OCI-LY7 (cell line): ENCODE measurements at regions of chr15 and their contacts with region 1.

Region 1: GRCh38 chr15:86743283-86743903 is 663.7 kb downstream of the AGBL1 start:
- DNase-seq: peak; percentile 18
- H3K4me3 ChIP-seq: no peak overlapping the region
- H3K27ac ChIP-seq: no peak overlapping the region
- H3K4me1 ChIP-seq: no peaks in the 10 kb centered on the region
- CTCF ChIP-seq: peak; percentile 80

Region 2: DNA sequence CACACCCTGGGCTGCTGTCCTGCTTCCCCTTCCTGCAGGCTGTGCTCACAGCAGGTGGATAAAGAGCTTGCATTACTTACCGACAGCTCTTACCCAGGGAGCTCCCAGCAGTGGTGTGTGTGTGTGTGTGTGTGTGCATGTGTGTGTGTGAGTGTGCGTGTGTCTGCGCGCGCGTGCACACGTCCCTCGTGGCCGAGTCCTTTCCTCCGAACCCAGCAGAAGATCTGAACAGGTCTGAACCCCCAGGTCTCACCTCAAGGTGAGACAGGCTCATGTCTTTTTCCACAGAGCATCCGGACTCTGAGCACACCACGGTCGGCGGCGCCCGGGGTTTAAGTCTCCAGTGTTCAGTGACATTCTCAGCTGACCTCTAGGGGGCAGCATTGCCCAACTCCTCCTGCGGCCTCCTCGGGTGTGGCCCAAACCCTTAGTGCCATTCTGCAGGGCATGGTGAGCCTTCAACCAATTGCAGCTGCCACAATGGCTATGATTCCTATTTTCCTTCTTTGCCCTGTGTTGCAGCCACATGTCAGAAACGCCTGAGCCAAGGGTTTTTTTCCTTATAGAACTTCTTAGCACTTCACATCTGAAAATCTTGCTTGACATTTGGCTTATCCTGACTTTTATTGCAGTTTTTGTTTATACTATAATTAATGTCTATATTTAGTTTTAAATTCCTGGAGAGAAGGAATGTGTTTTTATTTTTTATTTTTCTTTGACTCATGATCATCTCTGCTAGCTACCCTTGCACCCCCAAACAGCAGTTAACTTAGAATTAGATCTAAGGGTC is 884.6 kb before region 1 on chr15:
- CTCF ChIA-PET with region 1: no interaction called
- POLR2A ChIA-PET with region 1: no interaction called
- intact Hi-C with region 1: loop called (anchors 10 kb)
- DNase-seq: peak; percentile 73
- H3K4me3 ChIP-seq: no peak overlapping the region
- H3K27ac ChIP-seq: no peak overlapping the region
- H3K4me1 ChIP-seq: no peaks in the 10 kb centered on the region
- CTCF ChIP-seq: peak; percentile 93

Region 3: DNA sequence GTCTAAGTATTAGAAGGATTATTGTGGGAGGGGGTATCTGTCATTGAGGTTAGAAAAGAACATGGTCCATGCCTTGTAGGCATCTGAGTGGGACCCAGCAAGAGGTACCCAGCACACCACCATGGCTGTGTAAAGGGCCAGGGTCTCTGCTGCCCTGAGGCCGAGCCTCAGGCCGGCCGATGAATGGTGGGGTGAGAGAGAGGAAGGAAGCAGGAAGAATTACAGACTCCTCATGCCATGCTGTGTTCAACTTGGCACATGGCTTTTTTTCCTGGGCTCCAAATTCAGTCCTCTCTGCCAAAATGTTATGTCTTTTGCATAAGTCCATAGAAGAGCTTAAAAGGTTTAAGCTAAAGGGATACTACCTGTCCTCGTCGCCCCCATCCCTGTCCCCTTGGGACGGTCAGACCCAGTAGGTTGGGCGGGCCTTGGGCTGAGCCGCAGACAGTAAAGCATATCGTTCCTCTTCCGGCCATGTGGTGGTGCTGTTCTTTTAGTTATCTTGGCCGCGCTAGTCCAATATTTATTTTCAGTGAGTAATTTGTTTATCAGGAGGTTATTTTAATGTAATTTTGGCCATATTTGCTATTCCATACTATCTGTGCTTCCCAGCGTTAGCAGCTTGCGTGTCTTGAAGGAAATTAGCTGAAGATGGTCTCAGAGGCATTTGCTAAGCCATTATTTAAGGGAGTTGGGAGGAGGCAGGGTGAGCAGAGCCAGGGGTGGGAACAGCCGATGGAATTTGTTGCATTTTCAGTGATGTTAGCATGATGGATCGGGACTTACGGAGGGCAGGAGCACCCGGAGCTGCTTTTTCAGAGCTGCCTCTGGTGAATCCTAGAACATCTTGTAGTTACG is 511.3 kb before region 1 on chr15:
- CTCF ChIA-PET with region 1: no interaction called
- POLR2A ChIA-PET with region 1: interaction called, 3 read pairs
- intact Hi-C with region 1: loop called (anchors 5 kb)
- DNase-seq: peak; percentile 37
- H3K4me3 ChIP-seq: no peak overlapping the region
- H3K27ac ChIP-seq: no peak overlapping the region
- H3K4me1 ChIP-seq: no peaks in the 10 kb centered on the region
- CTCF ChIP-seq: peak; percentile 82